Heart left ventricle (tissue), 16 donors: ENCODE measurements at regions of chr1 and their contacts with region 1.

Region 1: DNA sequence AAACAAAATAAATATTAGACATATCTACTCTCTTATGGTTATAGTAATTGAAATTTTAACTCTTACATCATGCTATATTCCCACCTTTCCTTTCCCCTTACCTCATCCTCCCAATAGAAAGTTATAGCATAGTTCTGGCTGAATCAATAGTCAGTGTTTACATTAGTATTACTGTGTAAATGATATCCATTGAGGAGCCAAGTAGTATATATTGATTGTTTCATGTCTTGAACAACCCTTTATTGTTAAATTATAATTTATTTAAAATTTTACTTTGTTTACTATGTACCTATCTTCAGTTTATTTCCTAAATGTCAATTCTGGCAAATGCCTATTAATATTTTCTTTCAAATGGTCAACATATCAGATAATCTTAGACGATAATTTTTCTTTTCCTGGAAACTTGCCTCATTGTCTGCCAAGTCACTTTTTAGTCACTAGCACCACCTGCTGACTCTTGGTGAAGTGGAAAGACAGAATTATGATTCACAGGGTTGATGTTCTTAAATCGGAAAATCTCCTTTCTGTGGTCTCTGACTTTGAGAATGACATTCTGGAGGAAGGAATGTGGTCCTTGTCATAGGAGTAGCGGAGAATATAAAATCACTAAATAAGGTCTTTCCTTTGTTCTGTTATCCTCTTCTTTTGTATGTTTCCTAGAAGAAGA is 8.7 kb downstream of the HJV start:
- DNase-seq: peak in 1 of 5 donors; percentile 46
- ATAC-seq: peak in 2 of 4 donors; percentile 31 to 54
- H3K4me3 ChIP-seq: no peak overlapping the region
- H3K27ac ChIP-seq: no peak overlapping the region
- H3K4me1 ChIP-seq: peaks cover 0 to 25% (median 7%) of the 10 kb centered on the region in 12 donors
- H3K27me3 ChIP-seq: no peaks in the 10 kb centered on the region
- CTCF ChIP-seq: peak; percentile 60 to 90 (median 84)
- POLR2A ChIP-seq: no peak

Region 2: GRCh38 chr1:145845514-145846161 is 167.2 kb before region 1 on chr1 and contains the start of gene NUDT17:
- intact Hi-C with region 1: loop called (anchors 1 to 5 kb)
- DNase-seq: peak; percentile 79 to 91 (median 85)
- ATAC-seq: peak; percentile 69 to 88 (median 84)
- H3K4me3 ChIP-seq: peak within 1 kb of the TSS; percentile 9 to 75 (median 66)
- H3K27ac ChIP-seq: peak within 1 kb of the TSS; percentile 3 to 85 (median 74)
- H3K4me1 ChIP-seq: peaks cover 0 to 23% (median 13%) of the 10 kb centered on the region in 12 donors
- H3K27me3 ChIP-seq: no peaks in the 10 kb centered on the region
- CTCF ChIP-seq: peak; percentile 87 to 98 (median 96)
- POLR2A ChIP-seq: no peak
- total RNA-seq, gene NUDT17: 1.7 to 10.9 (median 4.3) TPM

Region 3: GRCh38 chr1:145891587-145892485 is 121.0 kb before region 1 on chr1:
- intact Hi-C with region 1: loop called (anchors 2 to 10 kb)
- DNase-seq: peak; percentile 89 to 95 (median 93)
- ATAC-seq: peak; percentile 87 to 95 (median 94)
- H3K4me3 ChIP-seq: peak overlapping the region in 9 of 12 donors; percentile 1 to 35 (median 10)
- H3K27ac ChIP-seq: peak overlapping the region; percentile 77 to 91 (median 83)
- H3K4me1 ChIP-seq: peaks cover 3 to 29% (median 26%) of the 10 kb centered on the region in 12 donors
- H3K27me3 ChIP-seq: no peaks in the 10 kb centered on the region
- CTCF ChIP-seq: peak; percentile 85 to 98 (median 94)
- POLR2A ChIP-seq: no peak

Region 4: DNA sequence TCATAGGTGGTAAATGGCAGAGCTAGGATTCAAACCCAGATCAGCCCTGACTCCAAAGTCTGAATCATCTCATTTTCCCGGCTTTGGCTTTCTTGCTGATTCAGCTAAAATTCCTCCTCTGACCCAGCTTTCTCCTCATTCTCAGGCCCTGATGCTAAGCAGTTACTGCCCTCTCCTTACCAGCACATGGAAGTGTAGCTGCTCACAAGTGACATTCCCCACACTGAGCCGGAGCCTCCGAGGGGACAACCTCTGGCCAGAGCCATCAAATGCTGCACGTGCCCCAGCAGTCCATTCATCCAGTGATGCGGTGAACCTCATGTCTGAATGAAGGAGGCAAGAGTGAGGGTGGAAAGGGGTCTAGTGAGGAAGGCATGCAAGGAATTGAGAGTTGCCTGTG is 114.1 kb before region 1 on chr1:
- intact Hi-C with region 1: loop called in 8 of 10 experiments (anchors 2 to 10 kb)
- DNase-seq: no peak
- ATAC-seq: no peak
- H3K4me3 ChIP-seq: no peak overlapping the region
- H3K27ac ChIP-seq: no peak overlapping the region
- H3K4me1 ChIP-seq: no peaks in the 10 kb centered on the region
- H3K27me3 ChIP-seq: no peaks in the 10 kb centered on the region
- CTCF ChIP-seq: no peak
- POLR2A ChIP-seq: no peak

Region 5: DNA sequence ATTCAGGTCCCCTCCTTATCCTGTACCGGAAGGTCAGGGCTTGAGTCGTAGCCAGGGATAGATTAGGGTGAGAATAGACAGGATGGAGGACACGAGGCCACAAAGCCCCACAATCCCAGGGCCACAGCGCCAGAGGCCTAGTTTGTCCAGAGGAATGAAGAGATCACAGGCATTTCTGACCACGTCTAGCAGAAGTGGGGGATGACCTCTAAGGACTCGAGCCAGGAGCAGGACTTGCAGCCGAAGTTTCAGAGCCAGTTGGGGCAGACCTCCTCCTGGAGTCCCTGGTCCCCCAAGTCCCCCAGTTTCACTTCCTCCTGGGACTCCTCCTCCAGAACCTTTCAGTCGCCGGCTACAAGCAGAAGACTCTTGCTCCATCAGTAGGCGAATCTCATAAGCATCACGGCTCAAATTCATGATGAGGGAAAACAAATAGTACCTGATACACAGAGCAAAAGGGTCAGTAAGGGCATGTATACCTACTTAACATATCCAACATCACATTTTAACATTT is 100.7 kb before region 1 on chr1:
- intact Hi-C with region 1: loop called in 1 of 10 experiments (anchors 5 kb)
- DNase-seq: no peak
- ATAC-seq: no peak
- H3K4me3 ChIP-seq: no peak overlapping the region
- H3K27ac ChIP-seq: no peak overlapping the region
- H3K4me1 ChIP-seq: peaks cover 0 to 34% (median 23%) of the 10 kb centered on the region in 12 donors
- H3K27me3 ChIP-seq: no peaks in the 10 kb centered on the region
- CTCF ChIP-seq: no peak
- POLR2A ChIP-seq: no peak

Region 6: GRCh38 chr1:145978854-145979759 is 33.8 kb before region 1 on chr1:
- intact Hi-C with region 1: loop called in 2 of 10 experiments (anchors 2 kb)
- DNase-seq: peak; percentile 89 to 97 (median 96)
- ATAC-seq: peak; percentile 85 to 95 (median 89)
- H3K4me3 ChIP-seq: peak overlapping the region in 11 of 12 donors; percentile 1 to 46 (median 36)
- H3K27ac ChIP-seq: peak overlapping the region; percentile 81 to 98 (median 96)
- H3K4me1 ChIP-seq: peaks cover 23 to 70% (median 63%) of the 10 kb centered on the region in 12 donors
- H3K27me3 ChIP-seq: no peaks in the 10 kb centered on the region
- CTCF ChIP-seq: peak in 8 of 12 donors; percentile 10 to 54 (median 36)
- POLR2A ChIP-seq: peak in 1 of 2 donors; percentile 79